ENCODE measurements at regions of chr2 and their contacts with region 1.

Region 1: GRCh38 chr2:96801005-96801785 is 14.9 kb upstream of the CNNM3 start:
- DNase-seq: peak; percentile 89 to 94
- ATAC-seq: peak; percentile 98 to 99
- H3K4me3 ChIP-seq: no peak overlapping the region
- H3K27ac ChIP-seq: peak overlapping the region; percentile 84 to 90 (median 88)
- H3K4me1 ChIP-seq: peaks cover 6 to 8% of the 10 kb centered on the region in 2 donors
- H3K27me3 ChIP-seq: no peaks in the 10 kb centered on the region
- CTCF ChIP-seq: peak; percentile 92 to 96 (median 96)
- POLR2A ChIP-seq: no peak

Region 2: GRCh38 chr2:96547751-96548161 is 253.4 kb before region 1 on chr2:
- in situ Hi-C with region 1: no loop called
- intact Hi-C with region 1: loop called (anchors 5 kb)
- DNase-seq: no peak
- ATAC-seq: no peak
- H3K4me3 ChIP-seq: no peak overlapping the region
- H3K27ac ChIP-seq: no peak overlapping the region
- H3K4me1 ChIP-seq: peaks cover 14 to 22% of the 10 kb centered on the region in 2 donors
- H3K27me3 ChIP-seq: no peaks in the 10 kb centered on the region
- CTCF ChIP-seq: no peak
- POLR2A ChIP-seq: no peak

Region 3: DNA sequence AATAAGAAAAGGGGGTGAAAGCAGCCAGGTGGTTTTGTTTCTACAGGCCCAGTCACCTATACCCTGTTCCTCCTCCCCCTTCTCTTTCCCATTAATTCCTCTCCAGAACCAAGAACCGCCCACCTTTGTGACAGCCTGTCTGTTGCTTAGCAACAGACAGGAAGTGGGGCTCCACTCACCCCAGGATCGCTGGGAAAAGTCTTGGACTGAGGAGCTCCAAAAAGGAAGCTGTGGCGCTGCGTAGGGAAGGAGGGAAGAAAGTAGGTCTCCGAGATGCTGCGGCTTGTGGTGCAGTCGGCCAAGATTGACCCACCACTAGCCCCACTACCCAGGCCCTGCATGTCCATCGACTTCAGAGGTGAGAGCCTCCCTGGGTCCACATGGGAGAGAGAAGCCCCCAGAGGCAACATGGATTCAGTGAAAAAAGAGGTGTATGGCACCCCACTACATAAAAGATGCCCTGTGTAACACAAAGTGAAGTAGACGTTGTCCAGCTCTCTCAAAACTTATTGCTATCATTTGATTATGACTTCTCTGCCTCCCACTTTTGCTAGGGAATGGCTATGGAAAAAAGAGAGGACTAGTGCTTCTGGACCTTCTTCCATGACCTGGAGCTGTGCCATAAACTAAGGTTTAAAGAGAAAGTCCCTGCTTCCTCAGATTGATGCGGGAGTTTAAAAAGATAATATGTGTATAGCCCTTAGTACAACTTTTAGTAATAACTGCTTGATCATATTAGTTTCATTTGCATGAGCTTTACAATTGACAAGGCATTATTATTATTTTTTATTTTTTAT is 158.4 kb before region 1 on chr2 and contains the start of gene FER1L5:
- in situ Hi-C with region 1: no loop called
- intact Hi-C with region 1: no loop called
- DNase-seq: no peak
- ATAC-seq: no peak
- H3K4me3 ChIP-seq: peak within 1 kb of the TSS in 1 of 4 donors; percentile 17
- H3K27ac ChIP-seq: no peak within 1 kb of the TSS
- H3K4me1 ChIP-seq: peaks cover 0 to 4% of the 10 kb centered on the region in 2 donors
- H3K27me3 ChIP-seq: no peaks in the 10 kb centered on the region
- CTCF ChIP-seq: no peak
- POLR2A ChIP-seq: no peak
- total RNA-seq, gene FER1L5: not detected

Region 4: DNA sequence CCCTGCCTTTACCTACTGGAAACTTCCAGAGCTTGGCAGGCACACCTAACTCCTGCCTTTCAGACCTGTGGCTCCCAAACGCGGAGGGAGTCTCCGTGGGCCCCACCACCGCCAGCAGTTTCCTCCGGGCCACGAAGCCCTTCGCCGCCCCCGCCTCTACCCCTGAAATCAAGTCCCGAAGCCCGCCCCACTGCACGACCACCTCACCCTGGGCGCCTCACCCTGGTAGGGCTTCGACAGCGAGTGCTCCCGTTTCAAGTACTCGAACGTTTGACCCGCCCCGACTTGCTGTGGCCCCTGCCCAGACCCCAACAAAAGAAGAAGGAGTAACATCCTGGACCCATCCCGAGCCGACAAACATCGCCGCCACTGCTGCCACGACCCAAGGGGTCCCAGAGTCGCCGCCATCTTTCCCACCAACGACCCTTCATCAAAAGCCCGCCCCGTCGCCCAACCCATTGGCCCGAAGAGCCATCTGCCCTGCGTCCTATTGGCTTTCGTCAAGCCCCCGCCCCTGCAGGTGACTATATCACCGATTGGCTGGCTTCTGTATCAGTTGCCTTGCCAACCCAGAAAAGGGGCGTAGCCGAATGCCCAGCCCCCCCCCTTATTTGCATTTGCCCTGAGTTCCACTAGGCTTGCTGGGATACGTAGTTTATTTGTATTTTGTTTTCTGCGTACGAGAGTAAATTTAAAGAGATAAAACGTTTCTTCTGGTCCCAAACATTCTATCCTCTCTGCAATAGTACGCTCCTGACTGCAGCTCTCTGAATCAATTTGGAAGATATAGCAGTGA is 61.4 kb before region 1 on chr2 and contains the start of gene LMAN2L:
- in situ Hi-C with region 1: no loop called
- intact Hi-C with region 1: loop called (anchors 5 kb)
- DNase-seq: peak; percentile 98 to 99
- ATAC-seq: peak; percentile 98 to 99
- H3K4me3 ChIP-seq: peak within 1 kb of the TSS; percentile 77 to 90 (median 84)
- H3K27ac ChIP-seq: peak within 1 kb of the TSS; percentile 85 to 88 (median 88)
- H3K4me1 ChIP-seq: peaks cover 15 to 16% of the 10 kb centered on the region in 2 donors
- H3K27me3 ChIP-seq: no peaks in the 10 kb centered on the region
- CTCF ChIP-seq: peak in 2 of 5 experiments; percentile 11 to 21
- POLR2A ChIP-seq: peak; percentile 57 to 64
- total RNA-seq, gene LMAN2L: 8.8 to 17.3 (median 16.4) TPM

Region 5: GRCh38 chr2:96760036-96760985 is 40.9 kb before region 1 on chr2 and contains the start of gene CNNM4:
- in situ Hi-C with region 1: no loop called
- intact Hi-C with region 1: loop called (anchors 2 kb)
- DNase-seq: peak; percentile 89 to 93
- ATAC-seq: peak; percentile 80 to 87
- H3K4me3 ChIP-seq: peak within 1 kb of the TSS; percentile 64 to 87 (median 74)
- H3K27ac ChIP-seq: peak within 1 kb of the TSS; percentile 83 to 91 (median 88)
- H3K4me1 ChIP-seq: peaks cover 39 to 41% of the 10 kb centered on the region in 2 donors
- H3K27me3 ChIP-seq: no peaks in the 10 kb centered on the region
- CTCF ChIP-seq: peak in 1 of 5 experiments; percentile 36
- POLR2A ChIP-seq: peak; percentile 84 to 90
- total RNA-seq, gene CNNM4: 5.4 to 20.1 (median 9.1) TPM

Region 6: GRCh38 chr2:96769814-96770213 is 31.4 kb before region 1 on chr2:
- in situ Hi-C with region 1: no loop called
- intact Hi-C with region 1: loop called (anchors 2 kb)
- DNase-seq: peak; percentile 95 to 98
- ATAC-seq: peak; percentile 96 to 97
- H3K4me3 ChIP-seq: peak overlapping the region in 2 of 4 donors; percentile 17 to 18
- H3K27ac ChIP-seq: peak overlapping the region; percentile 89 to 95 (median 92)
- H3K4me1 ChIP-seq: peaks cover 27 to 29% of the 10 kb centered on the region in 2 donors
- H3K27me3 ChIP-seq: no peaks in the 10 kb centered on the region
- CTCF ChIP-seq: peak in 1 of 5 experiments; percentile 17
- POLR2A ChIP-seq: peak in 1 of 2 donors; percentile 51